H1 (cell line): ENCODE measurements at regions of chr6 and their contacts with region 1.

Region 1: DNA sequence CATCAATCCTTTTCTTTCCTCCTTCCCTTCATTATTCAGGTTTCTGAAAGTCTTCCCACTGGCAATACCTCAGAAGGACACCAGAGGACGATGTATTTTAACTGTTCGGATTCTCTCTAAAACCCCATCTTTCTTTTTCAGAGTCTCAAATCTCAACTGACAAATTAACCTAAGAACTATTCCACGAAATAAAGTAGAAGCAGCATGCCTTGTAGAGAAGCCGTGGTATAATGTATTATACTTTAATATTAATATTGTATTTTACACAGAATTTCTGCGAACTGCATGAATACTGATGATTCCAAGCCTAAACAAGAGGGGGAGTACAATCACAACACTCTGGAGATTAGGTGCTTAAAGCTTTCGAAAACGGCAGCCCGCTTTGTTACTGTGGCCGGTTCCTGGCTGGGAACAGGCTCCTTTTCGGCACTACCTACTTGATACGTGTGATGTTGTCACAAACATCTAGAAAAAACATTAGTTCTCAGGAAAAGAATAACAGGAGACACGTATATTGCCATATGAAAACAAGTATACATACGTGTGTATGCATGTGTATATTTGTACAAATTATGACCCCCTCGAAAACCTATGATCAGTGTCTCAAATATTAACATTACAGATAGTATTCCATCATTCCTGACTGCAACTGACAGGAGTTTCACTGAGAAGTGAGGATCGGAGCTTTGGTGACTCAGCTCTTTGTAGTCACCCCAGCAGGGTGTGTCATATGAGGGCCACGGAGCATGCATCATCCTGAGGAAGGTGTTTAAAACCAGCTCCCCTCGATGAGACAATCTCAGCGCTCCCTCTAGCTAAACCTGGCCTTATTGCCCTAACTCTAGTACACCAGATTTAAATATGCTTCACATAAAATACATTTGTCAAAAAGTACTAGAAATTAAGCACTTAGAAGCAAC is 319.7 kb upstream of the TCF21 start:
- DNase-seq: no peak
- H3K4me3 ChIP-seq: peak overlapping the region; percentile 3 to 56 (median 24); a peak in 6 of 8 replicates
- H3K27ac ChIP-seq: no peak overlapping the region
- H3K4me1 ChIP-seq: no peaks in the 10 kb centered on the region
- H3K27me3 ChIP-seq: no peaks in the 10 kb centered on the region
- CTCF ChIP-seq: peak in 2 of 3 experiments; percentile 58 to 66; a peak in 2 of 4 replicates
- EP300 ChIP-seq: no peak
- POLR2A ChIP-seq: no peak
- RAD21 ChIP-seq: peak; percentile 76 to 78

Region 2: GRCh38 chr6:133408543-133408942 is 160.7 kb before region 1 on chr6:
- CTCF ChIA-PET with region 1: no interaction called
- POLR2A ChIA-PET with region 1: no interaction called
- DNase-seq: no peak
- H3K4me3 ChIP-seq: no peak overlapping the region
- H3K27ac ChIP-seq: no peak overlapping the region
- H3K4me1 ChIP-seq: peaks cover 0 to 7% (median 2%) of the 10 kb centered on the region in 4 experiments; a peak in 1 of 7 replicates
- H3K27me3 ChIP-seq: no peaks in the 10 kb centered on the region
- CTCF ChIP-seq: no peak
- EP300 ChIP-seq: no peak
- POLR2A ChIP-seq: no peak
- RAD21 ChIP-seq: no peak

Region 3: GRCh38 chr6:133499662-133500061 is 69.6 kb before region 1 on chr6:
- CTCF ChIA-PET with region 1: no interaction called
- POLR2A ChIA-PET with region 1: no interaction called
- DNase-seq: no peak
- H3K4me3 ChIP-seq: no peak overlapping the region
- H3K27ac ChIP-seq: no peak overlapping the region
- H3K4me1 ChIP-seq: no peaks in the 10 kb centered on the region
- H3K27me3 ChIP-seq: peaks cover 0 to 1% (median 0%) of the 10 kb centered on the region in 4 experiments; a peak in 1 of 7 replicates
- CTCF ChIP-seq: no peak
- EP300 ChIP-seq: no peak
- POLR2A ChIP-seq: no peak
- RAD21 ChIP-seq: no peak

Region 4: GRCh38 chr6:133609404-133610270 is 40.4 kb after region 1 on chr6:
- CTCF ChIA-PET with region 1: interaction called, 10 read pairs
- POLR2A ChIA-PET with region 1: no interaction called
- DNase-seq: no peak
- H3K4me3 ChIP-seq: no peak overlapping the region
- H3K27ac ChIP-seq: no peak overlapping the region
- H3K4me1 ChIP-seq: no peaks in the 10 kb centered on the region
- H3K27me3 ChIP-seq: no peaks in the 10 kb centered on the region
- CTCF ChIP-seq: no peak
- EP300 ChIP-seq: no peak
- POLR2A ChIP-seq: no peak
- RAD21 ChIP-seq: no peak

Region 5: GRCh38 chr6:133817460-133818047 is 248.3 kb after region 1 on chr6:
- CTCF ChIA-PET with region 1: interaction called, 36 read pairs
- POLR2A ChIA-PET with region 1: no interaction called
- DNase-seq: peak; percentile 61 to 96
- H3K4me3 ChIP-seq: no peak overlapping the region
- H3K27ac ChIP-seq: no peak overlapping the region
- H3K4me1 ChIP-seq: peaks cover 0 to 2% (median 0%) of the 10 kb centered on the region in 4 experiments; a peak in 1 of 7 replicates
- H3K27me3 ChIP-seq: no peaks in the 10 kb centered on the region
- CTCF ChIP-seq: peak; percentile 73 to 96 (median 91)
- EP300 ChIP-seq: no peak
- POLR2A ChIP-seq: no peak
- RAD21 ChIP-seq: peak; percentile 72 to 74

Region 6: GRCh38 chr6:133891149-133891926 is 322.1 kb after region 1 on chr6:
- CTCF ChIA-PET with region 1: interaction called, 10 read pairs
- POLR2A ChIA-PET with region 1: interaction called, 3 read pairs
- DNase-seq: peak in 1 of 2 experiments; percentile 72
- H3K4me3 ChIP-seq: peak overlapping the region; percentile 18 to 59 (median 36); a peak in 7 of 8 replicates
- H3K27ac ChIP-seq: no peak overlapping the region
- H3K4me1 ChIP-seq: peaks cover 3 to 20% (median 8%) of the 10 kb centered on the region in 4 experiments; a peak in 6 of 7 replicates
- H3K27me3 ChIP-seq: peaks cover 56 to 90% (median 78%) of the 10 kb centered on the region in 4 experiments
- CTCF ChIP-seq: no peak
- EP300 ChIP-seq: no peak
- POLR2A ChIP-seq: no peak
- RAD21 ChIP-seq: no peak

Region 7: DNA sequence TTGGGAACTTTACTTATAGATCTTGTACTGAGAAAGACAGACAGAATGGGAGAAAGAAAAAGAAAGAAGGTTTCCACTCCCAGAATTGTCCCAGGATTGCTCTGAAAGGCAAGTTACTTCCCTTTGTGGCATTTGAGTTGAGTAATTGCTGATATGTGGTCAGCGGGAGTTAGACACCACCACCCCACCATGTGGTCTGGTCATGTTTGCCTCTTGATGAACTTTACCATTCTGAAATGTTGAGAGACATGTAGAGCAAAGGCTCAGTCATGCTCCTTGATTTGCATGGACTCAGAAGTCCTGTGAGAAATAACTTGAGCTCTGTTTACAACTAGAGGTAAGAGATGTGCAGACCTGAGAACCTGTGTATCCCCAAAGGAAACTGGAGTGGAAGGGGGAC is 336.8 kb after region 1 on chr6:
- CTCF ChIA-PET with region 1: interaction called, 10 read pairs
- POLR2A ChIA-PET with region 1: no interaction called
- DNase-seq: no peak
- H3K4me3 ChIP-seq: no peak overlapping the region
- H3K27ac ChIP-seq: no peak overlapping the region
- H3K4me1 ChIP-seq: no peaks in the 10 kb centered on the region
- H3K27me3 ChIP-seq: no peaks in the 10 kb centered on the region
- CTCF ChIP-seq: no peak
- EP300 ChIP-seq: no peak
- POLR2A ChIP-seq: no peak
- RAD21 ChIP-seq: no peak